ENCODE measurements at regions of chr1 and their contacts with region 1.

Region 1: DNA sequence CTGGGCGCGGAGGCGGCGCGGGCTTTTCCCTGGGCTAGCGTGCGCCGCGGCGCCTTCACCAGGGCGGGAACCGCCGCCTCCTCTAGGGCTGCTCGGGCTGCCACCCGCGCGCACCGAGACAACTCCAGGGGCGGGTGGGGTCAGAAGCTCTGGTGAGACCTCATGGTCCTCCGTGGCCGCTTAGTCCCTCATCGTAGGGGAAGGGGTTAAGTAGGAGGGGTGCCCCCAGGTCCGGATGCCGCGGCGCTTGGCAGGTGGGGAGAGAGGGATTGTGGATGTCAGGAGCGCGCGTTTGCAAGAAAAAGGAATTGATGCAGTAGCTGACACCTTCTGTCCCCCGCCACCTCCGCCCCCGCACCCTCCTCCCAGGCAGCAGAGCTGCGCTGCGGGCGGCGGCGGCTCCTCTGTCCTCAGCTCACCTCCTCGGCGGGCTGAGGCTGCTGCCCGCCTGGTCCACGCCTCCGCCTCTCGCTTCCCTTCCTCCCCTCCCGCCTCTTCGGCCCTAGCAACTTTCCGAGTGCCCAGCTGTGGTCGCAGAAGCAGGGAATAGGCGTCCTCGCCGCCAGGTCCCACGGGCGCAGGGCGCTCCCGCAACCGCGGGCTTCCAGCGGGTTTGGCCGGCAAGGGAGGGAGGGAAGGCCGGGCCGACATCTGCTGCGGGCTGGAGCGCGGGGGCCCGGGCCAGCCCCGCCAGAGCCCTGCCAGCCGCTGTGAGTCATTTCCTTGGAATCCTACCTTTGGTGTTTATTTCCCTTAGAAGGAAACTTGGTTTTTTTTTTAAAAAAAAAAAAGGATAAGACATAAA is 822 bp downstream of the SERTAD4 start:
- DNase-seq: peak; percentile 87
- ATAC-seq: peak; percentile 70
- H3K4me3 ChIP-seq: peak overlapping the region; percentile 85
- H3K27ac ChIP-seq: no peak overlapping the region
- H3K4me1 ChIP-seq: peaks cover 14% of the 10 kb centered on the region
- H3K27me3 ChIP-seq: peaks cover 16% of the 10 kb centered on the region
- CTCF ChIP-seq: no peak

Region 2: GRCh38 chr1:209827384-209828262 is 405.8 kb before region 1 on chr1 and contains the start of gene UTP25:
- CTCF ChIA-PET with region 1: no interaction called
- POLR2A ChIA-PET with region 1: no interaction called
- intact Hi-C with region 1: loop called (anchors 10 kb)
- DNase-seq: peak; percentile 99
- ATAC-seq: peak; percentile 28
- H3K4me3 ChIP-seq: peak within 1 kb of the TSS; percentile 83
- H3K27ac ChIP-seq: peak within 1 kb of the TSS; percentile 95
- H3K4me1 ChIP-seq: peaks cover 80% of the 10 kb centered on the region
- H3K27me3 ChIP-seq: no peaks in the 10 kb centered on the region
- CTCF ChIP-seq: peak; percentile 81
- total RNA-seq, gene UTP25: 14.3 and 15.3 TPM in 2 replicates

Region 3: GRCh38 chr1:210185063-210185462 is 48.4 kb before region 1 on chr1:
- CTCF ChIA-PET with region 1: no interaction called
- POLR2A ChIA-PET with region 1: no interaction called
- intact Hi-C with region 1: loop called (anchors 1 kb)
- DNase-seq: no peak
- ATAC-seq: no peak
- H3K4me3 ChIP-seq: no peak overlapping the region
- H3K27ac ChIP-seq: no peak overlapping the region
- H3K4me1 ChIP-seq: peaks cover 13% of the 10 kb centered on the region
- H3K27me3 ChIP-seq: no peaks in the 10 kb centered on the region
- CTCF ChIP-seq: no peak

Region 4: DNA sequence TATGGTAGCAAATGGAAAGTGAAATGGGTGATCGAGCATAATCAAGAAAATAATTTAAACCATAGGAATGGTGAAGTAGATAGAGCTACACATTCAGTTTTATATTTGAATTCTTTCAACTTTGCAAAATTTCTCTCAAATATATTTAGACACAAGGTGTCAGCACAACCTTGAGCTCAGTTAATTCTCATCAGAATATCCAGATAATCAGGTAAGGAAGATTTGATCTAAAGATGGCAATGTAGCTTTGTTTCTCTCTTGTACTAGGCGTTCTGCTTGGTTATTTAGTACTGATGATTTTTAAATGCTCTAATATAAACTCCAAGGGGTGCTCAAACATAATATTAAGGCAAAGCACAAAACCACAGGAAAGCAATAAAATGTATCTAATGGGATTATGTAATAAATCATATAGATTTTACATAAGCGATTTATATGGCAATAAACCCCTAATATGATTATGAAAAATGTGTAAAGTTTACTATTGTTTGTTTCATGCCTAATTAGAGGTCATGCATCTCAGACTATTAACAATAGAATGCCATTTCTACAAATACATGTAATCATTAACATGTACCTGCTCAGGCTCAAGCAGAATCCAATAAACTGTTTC is 33.2 kb before region 1 on chr1:
- CTCF ChIA-PET with region 1: no interaction called
- POLR2A ChIA-PET with region 1: no interaction called
- intact Hi-C with region 1: loop called (anchors 2 kb)
- DNase-seq: peak; percentile 23
- ATAC-seq: no peak
- H3K4me3 ChIP-seq: no peak overlapping the region
- H3K27ac ChIP-seq: no peak overlapping the region
- H3K4me1 ChIP-seq: peaks cover 6% of the 10 kb centered on the region; the same call in 1 of the 2 replicates
- H3K27me3 ChIP-seq: no peaks in the 10 kb centered on the region
- CTCF ChIP-seq: 0 out of 2 replicates have a peak, but pooled peaks have one; percentile 29

Region 5: GRCh38 chr1:210250998-210251679 is 17.7 kb after region 1 on chr1:
- CTCF ChIA-PET with region 1: no interaction called
- POLR2A ChIA-PET with region 1: interaction called, 12 read pairs
- intact Hi-C with region 1: loop called (anchors 1 kb)
- DNase-seq: peak; percentile 84
- ATAC-seq: peak; percentile 79
- H3K4me3 ChIP-seq: peak overlapping the region; percentile 68
- H3K27ac ChIP-seq: no peak overlapping the region
- H3K4me1 ChIP-seq: peaks cover 27% of the 10 kb centered on the region
- H3K27me3 ChIP-seq: no peaks in the 10 kb centered on the region
- CTCF ChIP-seq: no peak

Region 6: GRCh38 chr1:210321552-210321951 is 88.1 kb after region 1 on chr1:
- CTCF ChIA-PET with region 1: no interaction called
- POLR2A ChIA-PET with region 1: interaction called, 10 read pairs
- intact Hi-C with region 1: no loop called
- DNase-seq: no peak
- ATAC-seq: no peak
- H3K4me3 ChIP-seq: no peak overlapping the region
- H3K27ac ChIP-seq: no peak overlapping the region
- H3K4me1 ChIP-seq: no peaks in the 10 kb centered on the region
- H3K27me3 ChIP-seq: 0 out of 2 replicates have a peak, but pooled peaks cover 2% of the 10 kb centered on the region
- CTCF ChIP-seq: no peak

Region 7: GRCh38 chr1:210347112-210347511 is 113.7 kb after region 1 on chr1:
- CTCF ChIA-PET with region 1: no interaction called
- POLR2A ChIA-PET with region 1: interaction called, 10 read pairs
- intact Hi-C with region 1: no loop called
- DNase-seq: no peak
- ATAC-seq: peak; percentile 18; the same call in 1 of the 2 replicates
- H3K4me3 ChIP-seq: no peak overlapping the region
- H3K27ac ChIP-seq: no peak overlapping the region
- H3K4me1 ChIP-seq: no peaks in the 10 kb centered on the region; the same call in 1 of the 2 replicates
- H3K27me3 ChIP-seq: no peaks in the 10 kb centered on the region
- CTCF ChIP-seq: no peak

Region 8: GRCh38 chr1:210855440-210855839 is 622.0 kb after region 1 on chr1:
- CTCF ChIA-PET with region 1: no interaction called
- POLR2A ChIA-PET with region 1: no interaction called
- intact Hi-C with region 1: no loop called
- DNase-seq: no peak
- ATAC-seq: no peak
- H3K4me3 ChIP-seq: no peak overlapping the region
- H3K27ac ChIP-seq: no peak overlapping the region
- H3K4me1 ChIP-seq: no peaks in the 10 kb centered on the region
- H3K27me3 ChIP-seq: no peaks in the 10 kb centered on the region
- CTCF ChIP-seq: no peak

Measured in PC-3 (cell line).